Left ventricle myocardium superior (tissue), 1 donor: ENCODE measurements at regions of chr16 and their contacts with region 1.

Region 1: GRCh38 chr16:70444249-70445063 is 5.6 kb upstream of the ST3GAL2 start:
- DNase-seq: no peak
- ATAC-seq: no peak

Region 2: DNA sequence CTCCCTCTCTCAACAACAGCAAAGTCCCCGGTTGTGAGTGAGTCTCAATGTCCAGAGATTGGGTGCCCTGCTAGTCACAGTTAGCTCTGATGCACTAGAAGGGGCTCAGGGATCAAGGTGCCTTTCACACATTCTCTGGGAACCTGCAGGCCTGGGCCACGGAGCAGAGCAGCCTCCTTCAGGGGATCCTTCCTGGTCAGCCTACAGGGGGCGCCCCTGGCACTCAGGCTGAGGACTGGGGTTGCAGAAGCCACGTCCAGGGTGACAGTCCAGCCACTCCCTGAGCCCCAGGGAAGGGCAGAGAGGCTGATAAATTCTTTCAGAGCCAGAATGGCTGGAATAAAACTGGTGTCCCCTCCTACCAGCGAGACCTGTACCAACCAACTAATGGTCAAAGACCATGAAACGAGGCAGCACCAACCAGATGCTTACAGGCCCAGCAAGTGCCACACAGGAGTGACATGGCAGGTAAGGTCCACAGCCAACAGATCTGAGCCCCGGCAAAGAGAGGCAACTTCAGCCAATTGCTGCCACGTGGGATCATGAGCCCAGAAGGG is 49.0 kb before region 1 on chr16:
- intact Hi-C with region 1: loop called (anchors 10 kb)
- DNase-seq: peak; percentile 80
- ATAC-seq: peak; percentile 83